Transverse colon (tissue), 4 donors: ENCODE measurements at regions of chr17 and their contacts with region 1.

Region 1: DNA sequence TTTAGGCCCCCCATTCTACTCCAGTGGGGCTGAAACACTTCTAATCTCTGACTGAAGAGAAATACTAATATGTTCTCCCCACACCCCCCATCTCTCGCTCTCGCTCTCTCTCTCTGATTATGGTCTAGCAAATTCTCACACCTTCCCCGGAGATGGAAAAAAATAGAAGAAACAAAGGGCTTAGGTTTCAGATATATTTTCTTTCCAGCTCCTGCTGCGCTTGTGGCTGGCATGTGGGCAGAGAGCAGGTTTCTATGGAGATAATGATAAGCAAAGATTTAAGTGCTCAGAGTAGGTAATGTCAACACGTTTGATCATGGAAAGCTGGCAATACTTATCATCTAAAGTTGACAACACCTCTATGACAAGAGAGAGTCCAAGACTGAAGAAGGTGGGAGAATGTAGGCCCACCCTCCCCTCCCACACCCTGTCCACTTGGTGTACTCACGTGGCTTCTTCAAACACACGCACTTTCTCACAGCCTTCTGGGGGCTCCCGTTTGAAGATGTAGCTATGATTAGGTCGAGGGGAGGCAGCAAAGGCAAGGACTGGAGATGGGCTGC is 8.0 kb upstream of the SLC35B1 start:
- DNase-seq: no peak
- H3K4me3 ChIP-seq: no peak overlapping the region
- H3K27ac ChIP-seq: no peak overlapping the region
- H3K4me1 ChIP-seq: no peaks in the 10 kb centered on the region
- H3K27me3 ChIP-seq: no peaks in the 10 kb centered on the region
- CTCF ChIP-seq: no peak
- EP300 ChIP-seq: no peak
- POLR2A ChIP-seq: no peak

Region 2: GRCh38 chr17:49779739-49780231 is 64.0 kb after region 1 on chr17:
- in situ Hi-C with region 1: loop called in 1 of 4 experiments (anchors 10 kb)
- intact Hi-C with region 1: no loop called
- DNase-seq: peak; percentile 28
- H3K4me3 ChIP-seq: no peak overlapping the region
- H3K27ac ChIP-seq: peak overlapping the region in 3 of 4 donors; percentile 17 to 30 (median 27)
- H3K4me1 ChIP-seq: peaks cover 0 to 47% (median 7%) of the 10 kb centered on the region in 4 donors
- H3K27me3 ChIP-seq: no peaks in the 10 kb centered on the region
- CTCF ChIP-seq: peak; percentile 40 to 62 (median 47)
- EP300 ChIP-seq: no peak
- POLR2A ChIP-seq: no peak

Region 3: GRCh38 chr17:50331085-50331791 is 615.4 kb after region 1 on chr17:
- in situ Hi-C with region 1: no loop called
- intact Hi-C with region 1: loop called (anchors 10 kb)
- DNase-seq: no peak
- H3K4me3 ChIP-seq: no peak overlapping the region
- H3K27ac ChIP-seq: no peak overlapping the region
- H3K4me1 ChIP-seq: no peaks in the 10 kb centered on the region
- H3K27me3 ChIP-seq: peaks cover 6% of the 10 kb centered on the region
- CTCF ChIP-seq: no peak
- EP300 ChIP-seq: no peak
- POLR2A ChIP-seq: no peak

Region 4: DNA sequence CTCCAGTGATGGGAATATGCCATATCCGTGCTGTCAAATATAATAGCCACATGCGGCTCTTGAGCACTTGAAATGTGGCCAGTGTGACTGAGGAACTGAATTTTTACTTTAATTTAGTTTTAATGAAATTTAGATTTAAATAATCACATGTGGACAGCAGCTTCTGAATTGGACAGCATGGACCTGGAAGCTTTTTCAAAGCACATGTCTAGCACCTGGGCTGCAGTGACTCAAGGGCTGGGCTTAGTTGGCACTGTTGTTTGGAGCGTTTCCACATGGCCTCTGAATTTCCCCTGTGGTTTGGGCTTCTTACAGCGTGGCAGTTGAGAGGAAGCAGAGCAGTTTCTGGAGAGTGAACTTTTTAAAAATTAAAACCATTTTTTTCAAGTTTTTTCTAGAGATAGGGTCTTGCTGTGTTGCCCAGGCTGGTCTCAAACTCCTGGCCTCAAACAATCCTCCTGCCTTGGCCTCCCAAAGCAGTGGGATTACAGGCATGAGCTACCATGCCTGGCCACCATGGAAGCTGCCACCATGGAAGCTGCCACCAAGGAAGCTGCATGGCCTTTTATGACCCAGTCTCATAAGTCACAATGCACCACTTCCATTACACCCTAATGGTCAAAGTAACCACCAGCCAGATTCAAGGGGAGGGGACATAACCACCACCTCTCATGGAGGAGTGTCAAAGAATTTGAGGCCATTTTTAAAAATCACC is 1157.1 kb after region 1 on chr17:
- in situ Hi-C with region 1: no loop called
- intact Hi-C with region 1: loop called (anchors 5 kb)
- DNase-seq: no peak
- H3K4me3 ChIP-seq: no peak overlapping the region
- H3K27ac ChIP-seq: no peak overlapping the region
- H3K4me1 ChIP-seq: peaks cover 0 to 34% (median 9%) of the 10 kb centered on the region in 4 donors
- H3K27me3 ChIP-seq: no peaks in the 10 kb centered on the region
- CTCF ChIP-seq: no peak
- EP300 ChIP-seq: no peak
- POLR2A ChIP-seq: no peak